ENCODE measurements at regions of chr1 and their contacts with region 1.

Region 1: GRCh38 chr1:5745776-5746610 is 246.2 kb downstream of the NPHP4 start:
- DNase-seq: peak; percentile 86
- ATAC-seq: peak; percentile 96
- H3K4me3 Mint-ChIP-seq: no peak overlapping the region
- H3K27ac Mint-ChIP-seq: no peak overlapping the region
- H3K4me1 Mint-ChIP-seq: peaks cover 21% of the 10 kb centered on the region
- H3K27me3 Mint-ChIP-seq: no peaks in the 10 kb centered on the region; the same call in 1 of the 2 replicates
- CTCF ChIP-seq: peak; percentile 95

Region 2: GRCh38 chr1:5692664-5693063 is 53.3 kb before region 1 on chr1:
- CTCF ChIA-PET with region 1: interaction called, 10 read pairs
- POLR2A ChIA-PET with region 1: no interaction called
- DNase-seq: no peak
- ATAC-seq: no peak
- H3K4me3 Mint-ChIP-seq: no peak overlapping the region
- H3K27ac Mint-ChIP-seq: no peak overlapping the region
- H3K4me1 Mint-ChIP-seq: peaks cover 14% of the 10 kb centered on the region
- H3K27me3 Mint-ChIP-seq: peaks cover 9% of the 10 kb centered on the region; the same call in 1 of the 2 replicates
- CTCF ChIP-seq: no peak

Region 3: DNA sequence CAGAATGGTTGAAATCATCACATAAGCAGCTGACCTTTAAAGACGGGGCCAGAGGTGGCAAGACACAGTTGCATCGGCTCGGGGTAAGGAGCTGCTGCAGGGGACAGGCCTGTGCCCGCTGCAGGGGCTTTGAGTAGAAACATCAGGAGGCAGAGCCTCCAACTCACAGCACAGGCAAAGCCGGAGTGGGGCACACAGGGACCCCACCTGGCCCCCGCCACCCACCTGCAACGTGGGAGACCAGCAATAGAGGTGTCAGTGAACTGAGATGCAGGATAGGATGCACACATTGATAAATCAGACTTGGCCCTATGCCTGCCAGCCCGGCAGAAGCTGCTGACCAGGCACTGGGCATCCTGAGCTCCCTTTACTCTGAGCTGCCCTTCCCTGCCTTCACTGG is 11.0 kb before region 1 on chr1:
- CTCF ChIA-PET with region 1: interaction called, 18 read pairs
- POLR2A ChIA-PET with region 1: no interaction called
- DNase-seq: peak; percentile 3
- ATAC-seq: no peak
- H3K4me3 Mint-ChIP-seq: no peak overlapping the region
- H3K27ac Mint-ChIP-seq: no peak overlapping the region
- H3K4me1 Mint-ChIP-seq: no peaks in the 10 kb centered on the region
- H3K27me3 Mint-ChIP-seq: no peaks in the 10 kb centered on the region
- CTCF ChIP-seq: no peak

Region 4: DNA sequence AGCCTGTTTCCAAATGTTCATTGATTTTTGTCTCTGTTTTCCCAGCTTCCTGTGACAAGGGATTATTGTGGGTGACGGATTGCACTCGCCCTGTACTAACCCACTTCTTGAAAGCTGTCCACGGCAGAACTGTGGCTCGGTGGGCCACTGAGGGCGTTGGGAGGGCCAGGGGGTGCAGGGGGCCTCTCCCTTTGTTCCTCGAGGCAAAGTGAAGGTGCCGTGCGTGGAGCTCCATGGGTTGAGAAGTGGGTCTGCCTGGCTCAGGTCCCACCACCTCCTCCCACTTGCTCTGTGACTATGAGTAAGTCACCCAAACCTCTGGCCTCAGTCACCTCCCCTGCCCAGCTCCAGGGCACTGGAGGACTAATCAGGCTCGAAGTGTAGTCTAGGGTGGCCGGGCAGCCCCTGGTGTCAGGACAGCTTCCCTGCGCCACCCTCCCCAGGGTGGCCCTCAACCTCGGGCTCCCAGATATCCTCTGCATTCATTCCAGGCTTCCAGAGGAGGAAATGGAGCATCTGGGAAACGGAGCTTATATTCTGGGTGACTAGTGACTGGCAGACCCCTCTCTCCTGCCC is 97.6 kb after region 1 on chr1:
- CTCF ChIA-PET with region 1: interaction called, 10 read pairs
- POLR2A ChIA-PET with region 1: no interaction called
- DNase-seq: no peak
- ATAC-seq: no peak
- H3K4me3 Mint-ChIP-seq: no peak overlapping the region
- H3K27ac Mint-ChIP-seq: no peak overlapping the region
- H3K4me1 Mint-ChIP-seq: peaks cover 5% of the 10 kb centered on the region
- H3K27me3 Mint-ChIP-seq: peaks cover 4% of the 10 kb centered on the region; the same call in 1 of the 2 replicates
- CTCF ChIP-seq: no peak

Region 5: DNA sequence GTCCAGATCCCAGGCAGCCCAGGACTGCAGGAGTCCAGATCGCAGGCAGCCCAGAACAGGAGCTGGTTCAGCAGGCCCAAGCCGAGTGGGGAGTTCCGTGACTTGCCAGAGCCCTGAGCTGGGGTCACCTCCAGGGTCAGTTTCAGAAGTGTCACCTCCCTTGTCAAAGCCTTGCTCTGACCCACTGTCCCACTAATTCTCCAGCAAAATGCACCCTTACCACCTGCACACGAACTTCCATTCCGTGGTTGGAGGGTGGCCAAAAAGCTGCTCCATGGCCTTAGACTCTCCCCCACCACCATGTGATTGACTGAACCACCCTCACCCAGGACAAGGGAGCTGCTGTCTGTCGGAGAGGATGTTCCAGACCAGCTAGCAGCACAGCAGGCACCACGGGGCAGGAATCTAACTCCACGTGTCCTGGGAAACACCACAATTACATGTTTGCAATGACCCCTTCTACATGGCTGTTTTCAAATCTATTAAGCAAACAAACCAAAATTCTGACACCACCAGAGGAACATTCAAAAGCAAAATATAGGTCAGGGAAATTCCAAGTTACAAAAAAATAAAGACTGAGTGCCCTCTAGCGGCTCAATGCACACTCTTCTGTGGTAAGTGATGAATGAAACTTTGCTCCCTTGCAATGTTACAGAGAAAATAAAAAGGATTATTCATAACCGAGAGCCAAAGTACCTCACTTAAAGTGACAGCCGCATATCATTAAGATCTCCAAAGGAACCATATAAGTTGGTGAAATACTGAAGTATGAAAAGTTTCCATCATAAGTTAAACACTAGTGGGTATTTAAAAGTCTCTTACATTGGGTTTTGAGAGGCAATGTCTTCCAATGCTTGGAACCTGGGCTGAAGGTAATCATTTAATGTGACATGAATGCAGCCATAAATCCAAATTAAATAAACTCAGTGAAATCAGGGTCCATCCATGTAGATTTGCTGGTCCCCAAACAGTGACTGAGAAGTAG is 169.9 kb after region 1 on chr1:
- CTCF ChIA-PET with region 1: interaction called, 10 read pairs
- POLR2A ChIA-PET with region 1: no interaction called
- DNase-seq: no peak
- ATAC-seq: peak; percentile 60
- H3K4me3 Mint-ChIP-seq: no peak overlapping the region
- H3K27ac Mint-ChIP-seq: peak overlapping the region; percentile 80
- H3K4me1 Mint-ChIP-seq: peaks cover 6% of the 10 kb centered on the region; the same call in 1 of the 2 replicates
- H3K27me3 Mint-ChIP-seq: no peaks in the 10 kb centered on the region
- CTCF ChIP-seq: 0 out of 2 replicates have a peak, but pooled peaks have one; percentile 15